HEK293T (cell line): ENCODE measurements at regions of chr11 and their contacts with region 1.

Region 1: DNA sequence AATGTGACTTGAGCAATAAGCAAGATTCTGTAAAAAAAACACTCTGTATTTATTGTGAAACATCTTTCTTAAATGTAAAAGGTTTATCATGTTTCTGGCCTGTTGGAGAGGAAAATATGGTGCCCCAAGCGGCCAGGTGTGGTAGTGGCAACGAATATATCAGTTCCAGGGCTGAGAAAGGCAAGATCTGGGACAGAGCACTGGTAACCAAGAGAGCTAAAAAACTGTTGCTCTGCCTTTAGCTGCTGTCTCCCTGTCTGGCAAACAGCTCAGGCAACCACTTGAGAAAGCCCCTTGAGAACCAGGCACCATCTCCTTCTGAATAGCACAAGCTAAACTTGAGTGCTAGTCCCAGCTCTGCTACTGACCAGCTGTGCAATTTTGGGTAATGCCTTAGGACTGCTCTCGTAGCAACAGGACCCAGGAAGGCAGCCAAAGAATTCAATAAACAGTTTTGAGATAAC is 129.9 kb downstream of the KCNC1 start:
- DNase-seq: peak; percentile 39

Region 2: DNA sequence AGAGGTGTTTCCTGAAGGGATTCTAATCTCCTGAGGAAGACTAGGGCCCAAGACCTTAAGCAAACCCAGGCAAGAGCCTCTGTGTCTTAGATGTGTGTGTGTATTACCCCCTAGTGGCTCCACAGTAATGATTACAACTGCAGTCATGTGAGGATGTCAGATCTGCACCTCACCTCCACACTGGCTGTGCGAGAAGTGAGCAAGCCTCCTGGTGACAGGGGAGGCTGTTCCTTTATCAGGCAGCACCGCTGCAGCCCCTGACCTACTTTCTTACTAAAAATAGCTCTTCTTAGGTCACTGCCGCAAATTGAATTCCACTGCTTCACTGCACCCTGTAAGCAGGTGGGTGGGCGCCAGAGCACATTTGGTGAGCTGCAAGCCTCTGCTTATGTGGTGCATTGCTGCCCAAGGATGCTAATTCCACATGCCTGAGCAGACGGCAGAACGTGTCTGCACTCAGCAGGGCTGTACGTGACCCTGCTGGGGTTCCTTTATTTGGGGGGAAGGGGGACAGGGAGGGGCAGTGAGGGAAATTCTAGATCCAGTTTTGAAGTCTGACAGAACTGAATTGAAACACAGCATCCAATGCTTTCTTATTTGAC is 17.6 kb before region 1 on chr11:
- CTCF ChIA-PET with region 1: interaction called, 11 read pairs
- POLR2A ChIA-PET with region 1: no interaction called
- DNase-seq: peak; percentile 9

Region 3: DNA sequence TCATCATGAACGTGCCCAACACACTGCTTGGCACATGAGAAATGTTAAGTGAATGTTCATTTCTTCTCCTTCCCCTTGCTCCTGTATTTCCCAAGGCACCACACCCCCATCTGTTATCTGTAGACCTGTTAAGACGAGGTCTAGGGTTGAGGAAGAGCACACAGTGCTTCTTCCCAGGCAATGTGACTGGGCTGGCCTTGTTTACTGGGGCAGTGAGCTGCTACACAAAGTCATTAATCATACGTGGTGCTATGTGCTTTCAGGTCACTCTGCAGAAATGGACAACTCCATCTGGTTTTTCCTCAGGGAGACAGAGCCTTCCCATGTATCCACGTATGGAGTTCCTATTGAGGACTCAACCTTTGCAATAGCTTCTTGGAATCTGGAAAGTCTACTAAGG is 11.2 kb before region 1 on chr11:
- CTCF ChIA-PET with region 1: interaction called, 12 read pairs
- POLR2A ChIA-PET with region 1: no interaction called
- DNase-seq: no peak